Left ventricle myocardium superior (tissue), 1 donor: ENCODE measurements at regions of chr6 and their contacts with region 1.

Region 1: DNA sequence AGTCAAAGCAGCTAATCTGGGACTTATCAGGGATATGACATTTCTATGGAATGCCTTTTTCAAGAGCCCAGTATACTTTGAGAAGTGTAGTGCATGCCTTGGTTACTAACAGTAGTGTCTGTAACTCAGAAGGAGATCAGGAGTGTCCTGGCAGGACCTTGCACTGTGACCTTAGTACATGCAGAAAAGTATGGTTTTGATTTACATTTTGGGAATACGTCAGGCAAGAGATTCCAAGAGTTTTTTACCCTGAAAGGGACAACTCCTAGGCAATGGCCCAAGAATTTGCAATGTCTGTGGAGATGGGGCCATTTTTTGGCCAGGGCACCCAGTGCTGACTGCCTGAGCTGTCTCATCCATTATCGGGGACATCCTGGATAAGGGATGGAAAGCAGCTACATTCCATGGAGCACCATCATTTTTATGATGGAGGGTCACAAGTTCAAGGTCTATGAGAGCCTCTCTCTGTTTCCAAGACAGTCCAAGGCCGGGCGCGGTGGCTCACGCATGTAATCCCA is 80.2 kb downstream of the FAM50B start:
- DNase-seq: peak; percentile 49
- ATAC-seq: peak; percentile 8

Region 2: GRCh38 chr6:3742426-3743344 is 186.7 kb before region 1 on chr6:
- intact Hi-C with region 1: loop called (anchors 2 kb)
- DNase-seq: peak; percentile 88
- ATAC-seq: peak; percentile 77